Aorta (tissue), 5 donors: ENCODE measurements at regions of chrX and their contacts with region 1.

Region 1: GRCh38 chrX:130060122-130061069 is 49.9 kb downstream of the ELF4 start:
- DNase-seq: peak; percentile 85 to 95
- ATAC-seq: peak; percentile 93
- H3K4me3 ChIP-seq: peak overlapping the region in 1 of 2 donors; percentile 1
- H3K27ac ChIP-seq: no peak overlapping the region
- H3K4me1 ChIP-seq: no peaks in the 10 kb centered on the region
- H3K27me3 ChIP-seq: no peaks in the 10 kb centered on the region

Region 2: GRCh38 chrX:129433461-129433860 is 626.9 kb before region 1 on chrX:
- intact Hi-C with region 1: no loop called
- DNase-seq: no peak
- ATAC-seq: no peak
- H3K4me3 ChIP-seq: no peak overlapping the region
- H3K27ac ChIP-seq: no peak overlapping the region
- H3K4me1 ChIP-seq: no peaks in the 10 kb centered on the region
- H3K27me3 ChIP-seq: no peaks in the 10 kb centered on the region

Region 3: DNA sequence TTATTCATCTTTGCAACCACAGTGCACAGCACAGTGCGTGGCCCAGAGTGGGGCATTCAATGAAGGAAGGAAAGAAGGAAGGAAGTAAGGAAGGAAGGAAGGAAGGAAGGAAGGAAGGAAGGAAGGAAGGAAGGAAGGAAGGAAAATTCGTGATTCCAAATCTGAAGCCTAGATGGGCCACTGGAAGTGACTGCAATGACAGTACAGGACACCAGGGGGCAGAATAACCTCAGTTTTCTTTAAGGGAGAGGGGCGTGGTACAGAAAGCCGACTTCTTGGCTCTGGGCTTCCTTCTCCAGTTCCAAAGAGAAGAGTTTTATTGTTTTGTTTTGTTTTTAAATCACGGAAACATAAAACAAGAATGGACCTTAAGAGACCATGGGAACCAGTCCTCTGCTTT is 453.5 kb before region 1 on chrX:
- intact Hi-C with region 1: loop called in 1 of 2 experiments (anchors 2 kb)
- DNase-seq: no peak
- ATAC-seq: peak; percentile 71
- H3K4me3 ChIP-seq: no peak overlapping the region
- H3K27ac ChIP-seq: no peak overlapping the region
- H3K4me1 ChIP-seq: no peaks in the 10 kb centered on the region
- H3K27me3 ChIP-seq: no peaks in the 10 kb centered on the region

Region 4: GRCh38 chrX:129931411-129932015 is 128.9 kb before region 1 on chrX:
- intact Hi-C with region 1: loop called (anchors 2 to 5 kb)
- DNase-seq: peak; percentile 95
- ATAC-seq: peak; percentile 95
- H3K4me3 ChIP-seq: peak overlapping the region; percentile 11 to 60
- H3K27ac ChIP-seq: peak overlapping the region in 1 of 2 donors; percentile 94
- H3K4me1 ChIP-seq: no peaks in the 10 kb centered on the region
- H3K27me3 ChIP-seq: no peaks in the 10 kb centered on the region